Aorta (tissue), 5 donors: ENCODE measurements at regions of chr10 and their contacts with region 1.

Region 1: GRCh38 chr10:17607603-17608332 is 9.4 kb downstream of the HACD1 start:
- DNase-seq: no peak
- ATAC-seq: peak; percentile 88
- H3K4me3 ChIP-seq: no peak overlapping the region
- H3K27ac ChIP-seq: no peak overlapping the region
- H3K4me1 ChIP-seq: no peaks in the 10 kb centered on the region
- H3K27me3 ChIP-seq: no peaks in the 10 kb centered on the region

Region 2: DNA sequence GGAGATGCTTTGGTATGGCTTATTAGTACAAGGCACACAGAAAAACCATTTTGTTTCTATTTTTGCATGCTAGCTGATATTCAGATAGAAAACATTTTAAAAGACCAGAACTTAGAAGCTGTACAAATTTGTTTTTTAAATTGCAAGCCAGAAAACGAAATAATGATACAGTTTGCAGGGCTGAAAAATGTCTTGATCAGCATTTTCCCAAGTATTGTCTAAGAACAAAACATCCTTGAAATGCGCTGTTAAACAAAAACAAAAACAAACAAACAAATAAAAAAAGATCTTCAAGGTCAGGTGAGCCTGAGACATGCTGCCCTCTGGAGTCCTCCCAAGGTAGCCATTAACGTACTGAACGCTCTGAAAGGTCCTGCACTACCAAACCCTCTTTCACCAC is 281.4 kb before region 1 on chr10:
- intact Hi-C with region 1: no loop called
- DNase-seq: no peak
- ATAC-seq: no peak
- H3K4me3 ChIP-seq: no peak overlapping the region
- H3K27ac ChIP-seq: no peak overlapping the region
- H3K4me1 ChIP-seq: no peaks in the 10 kb centered on the region
- H3K27me3 ChIP-seq: no peaks in the 10 kb centered on the region

Region 3: DNA sequence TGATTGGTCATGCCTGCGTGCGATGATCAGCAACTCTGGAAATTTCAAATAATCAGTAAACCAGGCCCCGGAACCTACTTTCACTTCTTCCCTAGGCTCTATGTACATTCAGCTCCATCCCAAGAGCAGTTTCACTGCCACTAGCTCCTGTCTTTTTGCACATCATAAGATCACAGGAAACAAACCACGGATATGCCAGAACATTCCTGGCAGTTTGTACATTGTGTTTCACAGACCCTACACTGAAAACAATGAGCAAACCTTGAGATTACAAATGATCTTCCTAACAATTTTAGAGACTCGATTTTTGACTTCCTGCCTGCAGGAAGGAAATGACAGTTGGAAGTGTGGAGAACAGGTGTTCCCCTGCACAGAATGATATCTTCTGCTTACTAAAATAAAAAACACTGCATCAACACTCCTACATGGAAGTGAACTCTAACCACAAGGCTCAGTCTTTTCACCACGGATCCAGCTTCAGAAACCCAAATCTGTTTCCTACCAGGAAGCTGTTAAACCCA is 136.6 kb after region 1 on chr10:
- intact Hi-C with region 1: loop called (anchors 2 kb)
- DNase-seq: no peak
- ATAC-seq: no peak
- H3K4me3 ChIP-seq: no peak overlapping the region
- H3K27ac ChIP-seq: no peak overlapping the region
- H3K4me1 ChIP-seq: no peaks in the 10 kb centered on the region
- H3K27me3 ChIP-seq: no peaks in the 10 kb centered on the region